ENCODE measurements at regions of chr6 and their contacts with region 1.

Region 1: GRCh38 chr6:7910654-7911344 is at the start of gene TXNDC5:
- DNase-seq: peak; percentile 52 to 86 (median 68)
- H3K4me3 ChIP-seq: peak within 1 kb of the TSS; percentile 60 to 87 (median 78)
- H3K27ac ChIP-seq: peak within 1 kb of the TSS in 58 of 59 donors; percentile 52 to 96 (median 87)
- H3K27me3 ChIP-seq: no peaks in the 10 kb centered on the region
- CTCF ChIP-seq: peak in 6 of 56 donors; percentile 8 to 14 (median 10)
- total RNA-seq, gene TXNDC5: 15.5 to 55.1 (median 26.9) TPM

Region 2: DNA sequence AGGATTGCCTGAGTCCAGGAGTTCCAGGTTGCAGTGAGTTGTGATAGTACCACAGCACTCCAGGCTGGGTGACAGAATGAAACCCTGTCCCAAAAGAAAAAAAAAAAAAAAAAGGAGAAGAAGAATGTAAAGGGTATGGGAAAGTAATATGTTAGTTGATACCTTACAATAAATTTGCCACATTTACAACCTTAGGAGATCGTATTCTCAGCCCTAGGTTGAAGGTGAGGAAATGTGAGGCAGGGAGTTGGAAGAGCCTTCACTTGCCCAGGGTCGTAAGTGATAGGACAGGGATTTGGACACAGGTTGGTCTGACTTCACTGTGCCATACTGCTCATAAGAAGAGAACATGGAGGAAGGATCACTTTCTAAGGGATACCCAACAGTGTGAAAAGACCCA is 116.3 kb before region 1 on chr6:
- intact Hi-C with region 1: no loop called
- DNase-seq: no peak
- H3K4me3 ChIP-seq: no peak overlapping the region
- H3K27ac ChIP-seq: no peak overlapping the region
- H3K27me3 ChIP-seq: peaks cover 0 to 7% (median 0%) of the 10 kb centered on the region in 45 donors
- CTCF ChIP-seq: no peak

Region 3: DNA sequence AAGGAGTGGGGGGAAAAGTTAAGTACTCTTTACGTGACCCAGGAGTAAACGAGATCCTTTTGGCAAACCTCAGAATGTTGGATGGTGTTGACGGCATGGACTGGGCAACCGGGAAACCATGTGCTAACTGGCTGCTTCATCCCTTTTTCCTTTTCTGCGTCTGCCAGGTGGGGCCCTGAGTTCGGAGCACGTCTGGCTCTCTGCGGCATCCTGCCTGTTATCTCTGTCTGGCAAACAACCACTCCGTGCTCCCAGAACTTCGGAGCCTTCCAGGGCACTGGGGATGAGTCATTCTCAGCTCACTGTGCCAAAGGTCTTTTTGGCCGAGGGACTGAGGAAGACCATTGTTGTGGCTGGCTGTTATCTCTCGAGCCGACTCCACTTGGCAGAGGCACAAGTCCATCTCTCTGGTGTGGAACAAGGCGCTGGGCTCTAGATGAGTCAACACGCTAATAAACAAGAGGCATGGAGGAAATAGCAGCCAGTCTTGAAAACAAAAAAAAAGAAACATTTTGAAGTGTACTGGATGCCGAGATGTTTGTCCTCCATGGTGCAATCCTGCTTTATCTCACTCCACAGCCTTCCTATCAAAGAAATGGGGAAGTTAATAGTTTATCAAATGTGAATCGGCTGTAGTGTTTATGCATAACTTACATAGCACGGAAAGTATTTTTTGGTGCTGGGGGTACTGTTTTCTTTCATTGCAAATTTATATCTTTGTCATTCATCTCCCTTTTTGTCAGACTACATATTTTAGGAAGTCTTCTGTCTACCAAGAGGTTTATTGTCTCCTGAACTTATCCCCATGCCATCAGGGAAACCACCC is 64.4 kb after region 1 on chr6:
- intact Hi-C with region 1: loop called (anchors 2 to 5 kb)
- DNase-seq: peak; percentile 29 to 92 (median 86)
- H3K4me3 ChIP-seq: peak overlapping the region in 50 of 59 donors; percentile 1 to 58 (median 32)
- H3K27ac ChIP-seq: peak overlapping the region in 58 of 59 donors; percentile 33 to 97 (median 85)
- H3K27me3 ChIP-seq: no peaks in the 10 kb centered on the region
- CTCF ChIP-seq: peak in 3 of 56 donors; percentile 9 to 24 (median 14)

Region 4: GRCh38 chr6:7992002-7992815 is 81.4 kb after region 1 on chr6:
- intact Hi-C with region 1: loop called in 1 of 2 experiments (anchors 5 kb)
- DNase-seq: no peak
- H3K4me3 ChIP-seq: peak overlapping the region in 1 of 59 donors; percentile 10
- H3K27ac ChIP-seq: peak overlapping the region in 4 of 59 donors; percentile 11 to 42 (median 26)
- H3K27me3 ChIP-seq: no peaks in the 10 kb centered on the region
- CTCF ChIP-seq: peak in 55 of 56 donors; percentile 43 to 81 (median 60)

Region 5: DNA sequence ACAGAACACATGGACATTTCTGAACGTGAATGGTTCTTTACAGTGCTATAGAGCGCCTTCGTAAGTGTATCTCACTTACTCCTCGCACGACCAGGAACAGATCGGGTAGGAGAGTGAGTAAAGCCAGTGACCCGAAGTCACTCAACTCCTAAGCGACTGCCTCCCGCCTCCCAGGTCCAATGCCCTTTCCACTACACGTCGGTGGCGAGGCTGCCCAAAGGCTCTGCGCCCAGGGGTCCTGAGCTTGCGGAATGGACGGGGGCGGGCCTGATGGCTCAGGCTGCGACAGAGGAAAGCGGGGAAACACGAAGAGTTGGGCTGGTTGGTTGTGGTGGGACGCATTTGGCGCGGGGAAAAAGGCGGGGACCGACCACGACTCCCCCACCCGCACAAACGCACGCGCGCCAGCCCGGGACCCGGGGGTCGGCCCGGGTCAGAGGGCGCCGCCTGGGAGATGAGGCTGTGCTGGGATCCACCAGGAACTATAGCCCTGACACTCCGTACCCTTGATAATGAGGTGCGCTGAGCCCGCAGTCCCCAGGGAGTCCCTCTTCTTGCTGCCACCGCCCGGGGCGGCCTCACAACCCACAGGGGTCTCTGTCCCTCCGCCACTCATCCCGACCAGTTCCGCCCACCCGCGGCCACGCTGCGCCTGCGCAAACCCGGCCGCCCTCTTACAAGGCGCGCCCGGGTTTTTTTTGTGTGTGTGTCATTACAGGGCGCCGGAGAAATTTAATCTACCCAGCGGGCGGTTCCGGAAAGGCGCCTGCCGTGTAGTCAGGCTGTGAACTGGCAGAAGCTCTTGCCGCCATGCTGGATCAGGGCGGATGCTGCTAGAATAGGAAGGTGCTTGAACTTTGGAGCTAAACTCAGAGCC is 153.2 kb after region 1 on chr6 and contains the start of gene BLOC1S5:
- intact Hi-C with region 1: loop called in 1 of 2 experiments (anchors 5 kb)
- DNase-seq: peak; percentile 89 to 97 (median 96)
- H3K4me3 ChIP-seq: peak within 1 kb of the TSS; percentile 67 to 98 (median 87)
- H3K27ac ChIP-seq: peak within 1 kb of the TSS; percentile 58 to 96 (median 90)
- H3K27me3 ChIP-seq: no peaks in the 10 kb centered on the region
- CTCF ChIP-seq: peak in 44 of 56 donors; percentile 18 to 63 (median 38)
- total RNA-seq, gene BLOC1S5: 5.4 to 16.1 (median 9.1) TPM

Region 6: DNA sequence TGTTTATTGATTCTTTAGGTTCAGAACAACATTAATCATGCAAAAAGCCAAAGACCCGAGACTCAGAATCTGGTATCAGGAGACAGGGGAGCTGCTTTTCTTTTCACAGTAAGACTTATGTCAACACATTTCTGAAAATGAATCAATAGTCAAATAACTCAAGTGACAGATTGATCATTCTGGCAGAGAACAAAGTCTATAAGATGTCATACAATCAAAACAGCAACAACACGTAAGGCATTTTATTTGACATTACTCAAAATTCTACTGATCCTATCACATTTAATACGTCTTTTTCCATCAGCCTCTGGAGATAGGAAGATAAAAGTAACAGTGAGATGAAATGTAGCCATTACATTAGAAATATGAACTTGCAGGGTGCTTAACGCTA is 284.9 kb after region 1 on chr6:
- intact Hi-C with region 1: no loop called
- DNase-seq: no peak
- H3K4me3 ChIP-seq: no peak overlapping the region
- H3K27ac ChIP-seq: no peak overlapping the region
- H3K27me3 ChIP-seq: peaks cover 0 to 10% (median 0%) of the 10 kb centered on the region in 45 donors
- CTCF ChIP-seq: no peak

Measured in dorsolateral prefrontal cortex (tissue), 120 donors.